ENCODE measurements at regions of chr17 and their contacts with region 1.

Region 1: DNA sequence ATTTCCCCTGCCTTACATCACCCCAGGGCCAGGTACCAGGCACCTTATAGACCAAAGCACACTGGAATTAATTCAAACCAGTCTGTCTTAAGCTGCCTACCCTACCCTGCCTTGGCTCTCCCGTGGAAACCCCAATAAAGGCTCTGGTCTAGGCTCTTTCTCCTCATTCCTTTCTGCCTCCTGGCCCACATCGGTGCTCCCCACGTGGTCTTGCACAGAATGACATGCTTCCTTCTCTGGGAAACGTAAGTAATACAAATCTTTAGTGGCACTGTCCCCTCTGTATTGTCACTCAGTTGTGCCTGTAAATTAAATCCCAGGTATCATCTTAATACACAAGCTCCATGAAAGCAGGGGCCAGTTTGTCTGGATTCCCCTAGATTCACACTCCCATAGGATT is 16.6 kb downstream of the KRT25 start:
- DNase-seq: no peak

Region 2: GRCh38 chr17:40695874-40696472 is 42.6 kb before region 1 on chr17:
- intact Hi-C with region 1: loop called in 1 of 2 experiments (anchors 1 kb)
- DNase-seq: no peak

Region 3: GRCh38 chr17:40763752-40764151 is 25.2 kb after region 1 on chr17:
- intact Hi-C with region 1: no loop called
- DNase-seq: no peak